ENCODE measurements at regions of chr2 and their contacts with region 1.

Region 1: GRCh38 chr2:26244309-26245121 is at the starts of genes HADHA and HADHB:
- DNase-seq: peak; percentile 91 to 96
- H3K4me3 ChIP-seq: peak within 1 kb of the TSS; percentile 84 to 94 (median 92)
- H3K27ac ChIP-seq: peak within 1 kb of the TSS; percentile 94 to 98 (median 96)
- H3K4me1 ChIP-seq: peaks cover 39 to 77% (median 65%) of the 10 kb centered on the region in 4 donors
- H3K27me3 ChIP-seq: no peaks in the 10 kb centered on the region
- CTCF ChIP-seq: peak in 3 of 7 experiments; percentile 20 to 37 (median 26)
- EP300 ChIP-seq: no peak
- POLR2A ChIP-seq: peak in 2 of 4 donors; percentile 7 to 32
- total RNA-seq, gene HADHA: 79.7 to 144 (median 100) TPM
- total RNA-seq, gene HADHB: 72.9 to 178 (median 123) TPM

Region 2: GRCh38 chr2:26327291-26328272 is 83.1 kb after region 1 on chr2:
- intact Hi-C with region 1: loop called (anchors 10 kb)
- DNase-seq: no peak
- H3K4me3 ChIP-seq: no peak overlapping the region
- H3K27ac ChIP-seq: no peak overlapping the region
- H3K4me1 ChIP-seq: peaks cover 0 to 8% (median 0%) of the 10 kb centered on the region in 4 donors
- H3K27me3 ChIP-seq: no peaks in the 10 kb centered on the region
- CTCF ChIP-seq: no peak
- EP300 ChIP-seq: no peak
- POLR2A ChIP-seq: no peak

Region 3: DNA sequence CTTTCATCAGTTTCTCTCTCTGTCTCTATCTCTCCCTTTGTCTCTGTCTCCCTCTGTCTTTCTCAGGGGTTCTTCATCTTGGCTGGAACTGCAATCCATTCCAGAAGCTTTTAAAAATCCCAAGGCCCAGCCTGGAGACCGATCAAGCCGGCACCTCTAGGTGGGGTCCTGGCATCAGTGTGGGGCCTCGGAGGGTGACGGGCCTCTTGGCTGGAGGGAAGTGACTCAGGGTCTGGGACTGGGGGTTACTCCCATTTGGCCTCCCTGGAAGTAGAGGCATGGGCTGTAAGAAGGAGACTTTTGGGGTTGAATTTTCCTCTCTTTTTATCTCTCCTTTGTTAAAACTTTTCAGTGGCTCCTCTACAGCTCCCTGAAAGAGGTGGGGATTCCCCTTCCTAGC is 286.2 kb after region 1 on chr2:
- intact Hi-C with region 1: no loop called
- DNase-seq: no peak
- H3K4me3 ChIP-seq: no peak overlapping the region
- H3K27ac ChIP-seq: no peak overlapping the region
- H3K4me1 ChIP-seq: no peaks in the 10 kb centered on the region
- H3K27me3 ChIP-seq: peaks cover 0 to 17% (median 0%) of the 10 kb centered on the region in 3 donors
- CTCF ChIP-seq: no peak
- EP300 ChIP-seq: no peak
- POLR2A ChIP-seq: no peak